CD4-positive, alpha-beta T cell (primary cell): ENCODE measurements at regions of chr18 and their contacts with region 1.

Region 1: DNA sequence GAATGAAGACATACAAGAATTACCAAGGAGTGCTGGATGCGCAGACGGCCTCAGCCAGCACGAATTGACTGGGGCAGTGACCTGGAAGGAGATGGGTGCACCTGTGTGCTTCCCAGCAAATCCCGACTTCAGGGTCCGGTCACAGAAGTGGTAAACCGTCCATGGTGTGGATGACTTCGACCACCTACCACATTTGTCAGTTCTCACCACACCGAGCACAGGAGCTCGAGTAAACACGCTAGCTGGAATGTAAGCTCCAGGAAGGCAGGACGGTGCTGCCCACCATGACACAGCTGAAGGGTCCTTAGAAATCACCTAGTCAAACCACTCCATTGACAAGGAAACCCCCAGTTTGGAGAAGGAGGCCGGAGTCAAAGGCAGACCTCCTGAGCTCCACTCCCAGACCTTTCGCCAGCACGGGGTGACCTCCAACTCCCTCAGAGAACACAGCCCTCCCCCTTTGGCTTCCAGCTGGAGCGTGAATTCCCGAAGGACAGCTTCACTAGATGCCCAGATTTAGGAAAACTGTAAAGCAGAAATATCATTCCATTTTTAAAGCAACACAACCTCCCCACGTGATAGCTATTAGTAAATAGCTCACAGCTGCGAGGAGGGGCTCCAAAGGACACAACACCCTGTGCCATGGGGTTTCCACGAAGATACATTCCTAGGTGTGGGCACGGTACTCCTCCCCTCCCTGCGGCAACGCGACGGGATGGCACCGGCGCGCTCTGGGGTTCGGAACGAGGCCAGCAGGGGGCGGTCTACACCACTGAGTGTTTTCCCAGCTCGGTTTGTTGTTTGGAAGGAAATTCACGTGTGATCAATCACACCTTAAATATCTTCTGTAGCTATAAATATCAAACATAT is 34.1 kb upstream of the GNAL start:
- DNase-seq: peak in 11 of 14 experiments; percentile 10 to 50 (median 21)
- ATAC-seq: no peak
- H3K4me3 ChIP-seq: no peak overlapping the region
- H3K4me3 Mint-ChIP-seq: no peak overlapping the region
- H3K27ac ChIP-seq: no peak overlapping the region
- H3K27ac Mint-ChIP-seq: no peak overlapping the region
- H3K4me1 ChIP-seq: peaks cover 5% of the 10 kb centered on the region
- H3K4me1 Mint-ChIP-seq: no peaks in the 10 kb centered on the region
- H3K27me3 ChIP-seq: peaks cover 4 to 10% of the 10 kb centered on the region in 2 experiments
- H3K27me3 Mint-ChIP-seq: peaks cover 82% of the 10 kb centered on the region
- CTCF ChIP-seq: peak; percentile 55

Region 2: GRCh38 chr18:11669271-11669947 is 14.4 kb after region 1 on chr18:
- CTCF ChIA-PET with region 1: no interaction called
- POLR2A ChIA-PET with region 1: no interaction called
- intact Hi-C with region 1: no loop called
- DNase-seq: no peak
- ATAC-seq: no peak
- H3K4me3 ChIP-seq: no peak overlapping the region
- H3K4me3 Mint-ChIP-seq: no peak overlapping the region
- H3K27ac ChIP-seq: no peak overlapping the region
- H3K27ac Mint-ChIP-seq: no peak overlapping the region
- H3K4me1 ChIP-seq: no peaks in the 10 kb centered on the region
- H3K4me1 Mint-ChIP-seq: no peaks in the 10 kb centered on the region
- H3K27me3 ChIP-seq: peaks cover 3 to 4% of the 10 kb centered on the region in 2 experiments
- H3K27me3 Mint-ChIP-seq: peaks cover 22% of the 10 kb centered on the region
- CTCF ChIP-seq: no peak

Region 3: DNA sequence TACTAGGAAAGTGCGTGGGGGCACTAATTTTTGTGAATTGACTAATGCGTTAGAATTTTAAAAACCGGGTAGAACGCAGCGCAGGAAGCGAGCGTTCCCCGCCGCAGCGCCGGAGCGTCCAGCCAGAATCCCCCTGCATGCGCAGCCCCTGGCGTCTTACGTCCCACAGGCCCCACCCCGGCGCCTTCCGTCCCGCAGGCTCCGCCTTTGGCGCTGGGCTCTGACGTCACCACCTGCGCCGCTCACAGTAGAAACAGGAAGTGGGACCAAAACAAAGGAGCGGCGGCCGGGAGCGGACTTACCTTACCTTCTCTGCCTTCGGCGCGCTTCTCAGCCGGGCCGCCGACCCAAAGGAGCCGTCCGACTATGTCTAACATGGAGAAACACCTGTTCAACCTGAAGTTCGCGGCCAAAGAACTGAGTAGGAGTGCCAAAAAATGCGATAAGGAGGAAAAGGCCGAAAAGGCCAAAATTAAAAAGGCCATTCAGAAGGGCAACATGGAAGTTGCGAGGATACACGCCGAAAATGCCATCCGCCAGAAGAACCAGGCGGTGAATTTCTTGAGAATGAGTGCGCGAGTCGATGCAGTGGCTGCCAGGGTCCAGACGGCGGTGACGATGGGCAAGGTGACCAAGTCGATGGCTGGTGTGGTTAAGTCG is 196.3 kb after region 1 on chr18 and contains the start of gene CHMP1B:
- CTCF ChIA-PET with region 1: no interaction called
- POLR2A ChIA-PET with region 1: no interaction called
- intact Hi-C with region 1: no loop called
- DNase-seq: peak; percentile 95 to 99 (median 97)
- ATAC-seq: peak; percentile 74
- H3K4me3 ChIP-seq: peak within 1 kb of the TSS; percentile 64
- H3K4me3 Mint-ChIP-seq: peak within 1 kb of the TSS; percentile 100
- H3K27ac ChIP-seq: peak within 1 kb of the TSS; percentile 85 to 92
- H3K27ac Mint-ChIP-seq: peak within 1 kb of the TSS; percentile 97
- H3K4me1 ChIP-seq: peaks cover 27% of the 10 kb centered on the region
- H3K4me1 Mint-ChIP-seq: peaks cover 53% of the 10 kb centered on the region
- H3K27me3 ChIP-seq: no peaks in the 10 kb centered on the region
- H3K27me3 Mint-ChIP-seq: no peaks in the 10 kb centered on the region
- CTCF ChIP-seq: no peak
- total RNA-seq, gene CHMP1B: 64.4 to 67.4 TPM

Region 4: GRCh38 chr18:11872479-11873136 is 217.6 kb after region 1 on chr18:
- CTCF ChIA-PET with region 1: no interaction called
- POLR2A ChIA-PET with region 1: no interaction called
- intact Hi-C with region 1: loop called in 1 of 2 experiments (anchors 2 kb)
- DNase-seq: peak in 5 of 14 experiments; percentile 7 to 55 (median 28)
- ATAC-seq: peak; percentile 41
- H3K4me3 ChIP-seq: no peak overlapping the region
- H3K4me3 Mint-ChIP-seq: no peak overlapping the region
- H3K27ac ChIP-seq: no peak overlapping the region
- H3K27ac Mint-ChIP-seq: no peak overlapping the region
- H3K4me1 ChIP-seq: no peaks in the 10 kb centered on the region
- H3K4me1 Mint-ChIP-seq: no peaks in the 10 kb centered on the region
- H3K27me3 ChIP-seq: no peaks in the 10 kb centered on the region
- H3K27me3 Mint-ChIP-seq: peaks cover 4% of the 10 kb centered on the region
- CTCF ChIP-seq: peak; percentile 45